HepG2 (cell line): ENCODE measurements at regions of chr21 and their contacts with region 1.

Region 1: DNA sequence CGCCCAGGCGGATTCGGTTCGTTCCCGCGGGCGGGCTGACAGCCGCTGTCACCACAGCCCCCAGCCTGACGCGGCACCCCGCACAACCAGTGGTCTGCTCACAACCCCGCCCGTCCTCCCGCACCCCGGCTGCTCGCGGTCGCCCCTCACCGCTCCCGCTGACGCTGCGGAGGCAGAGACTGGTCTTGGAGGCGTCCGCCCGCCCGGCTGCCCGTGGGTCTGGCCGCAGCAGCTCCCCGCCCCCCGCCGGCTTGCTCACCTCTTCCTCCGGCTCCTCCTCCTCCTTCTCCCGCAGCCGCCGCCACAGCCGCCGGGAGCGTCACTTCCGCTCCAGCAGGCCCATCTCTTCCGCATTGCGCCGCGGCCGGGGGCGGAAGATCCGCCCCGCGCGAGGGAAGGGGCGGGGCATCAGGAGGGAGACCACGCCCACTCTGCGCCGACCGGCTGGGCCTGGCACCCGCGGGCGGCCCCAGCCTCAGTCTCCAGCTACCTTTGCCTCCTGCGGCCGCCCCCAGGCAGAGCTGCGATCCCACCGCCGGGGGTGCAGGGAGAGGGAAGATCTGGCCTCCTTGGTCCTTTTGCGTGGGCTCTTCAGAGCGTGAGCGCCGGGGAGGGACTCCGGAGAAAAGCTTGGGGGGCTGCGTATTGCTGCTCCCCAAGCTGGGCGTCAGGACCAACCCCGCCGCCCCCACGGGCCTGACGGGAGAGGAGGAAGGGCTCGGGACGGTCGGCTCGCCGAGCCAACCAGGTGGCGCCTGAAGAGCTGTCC is at the start of gene SYNJ1:
- DNase-seq: peak; percentile 87
- ATAC-seq: peak; percentile 92
- H3K4me3 ChIP-seq: peak within 1 kb of the TSS; percentile 76 to 94 (median 91)
- H3K27ac ChIP-seq: peak within 1 kb of the TSS; percentile 84
- H3K4me1 ChIP-seq: peaks cover 15% of the 10 kb centered on the region; the same call in 1 of the 2 replicates
- H3K27me3 ChIP-seq: no peaks in the 10 kb centered on the region; a peak in 1 of 5 replicates
- CTCF ChIP-seq: peak; percentile 27; the same call in 1 of the 2 replicates
- EP300 ChIP-seq: no peak
- POLR2A ChIP-seq: peak; percentile 48 to 82; a peak in 2 of 4 replicates
- RAD21 ChIP-seq: peak; percentile 45
- total RNA-seq, gene SYNJ1: 2.7 and 6.4 TPM in 2 replicates

Region 2: GRCh38 chr21:32747396-32747795 is 19.5 kb after region 1 on chr21:
- CTCF ChIA-PET with region 1: no interaction called
- POLR2A ChIA-PET with region 1: interaction called, 11 read pairs
- in situ Hi-C with region 1: no loop called
- intact Hi-C with region 1: no loop called
- DNase-seq: no peak
- ATAC-seq: no peak
- H3K4me3 ChIP-seq: no peak overlapping the region
- H3K27ac ChIP-seq: no peak overlapping the region
- H3K4me1 ChIP-seq: peaks cover 25% of the 10 kb centered on the region
- H3K27me3 ChIP-seq: no peaks in the 10 kb centered on the region
- CTCF ChIP-seq: no peak
- EP300 ChIP-seq: no peak
- POLR2A ChIP-seq: no peak
- RAD21 ChIP-seq: no peak

Region 3: DNA sequence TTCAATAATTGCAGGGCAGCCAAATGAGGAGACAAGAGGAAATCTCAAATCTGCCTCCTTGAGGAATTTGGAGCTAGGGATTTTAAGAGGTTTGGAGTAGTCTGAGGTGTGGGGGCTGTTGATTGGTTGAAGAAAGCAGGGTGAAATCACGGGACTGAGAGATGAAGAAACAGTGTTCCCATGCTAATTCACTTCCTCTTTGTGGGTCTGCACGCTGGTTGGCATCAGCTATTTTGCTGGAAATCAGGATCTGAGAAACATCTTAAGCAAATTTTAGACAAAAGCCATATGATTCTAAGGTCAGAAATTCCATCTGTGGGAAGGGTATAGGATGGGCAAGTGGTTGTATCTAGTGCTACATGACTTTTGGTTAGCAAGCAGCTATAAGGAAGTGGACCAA is 150.8 kb after region 1 on chr21:
- CTCF ChIA-PET with region 1: no interaction called
- POLR2A ChIA-PET with region 1: no interaction called
- in situ Hi-C with region 1: no loop called
- intact Hi-C with region 1: no loop called
- DNase-seq: no peak
- ATAC-seq: no peak
- H3K4me3 ChIP-seq: no peak overlapping the region
- H3K27ac ChIP-seq: no peak overlapping the region
- H3K4me1 ChIP-seq: no peaks in the 10 kb centered on the region
- H3K27me3 ChIP-seq: peaks cover 0 to 25% of the 10 kb centered on the region in 2 experiments; a peak in 3 of 5 replicates
- CTCF ChIP-seq: no peak
- EP300 ChIP-seq: no peak
- POLR2A ChIP-seq: no peak
- RAD21 ChIP-seq: no peak